Heart left ventricle (tissue), 16 donors: ENCODE measurements at regions of chr20 and their contacts with region 1.

Region 1: GRCh38 chr20:19784511-19785172 is 26.6 kb downstream of the RIN2 start:
- DNase-seq: peak in 4 of 5 donors; percentile 64 to 78 (median 73)
- ATAC-seq: peak; percentile 67 to 79 (median 72)
- H3K4me3 ChIP-seq: peak overlapping the region in 2 of 12 donors; percentile 5 to 6
- H3K27ac ChIP-seq: peak overlapping the region; percentile 69 to 91 (median 84)
- H3K4me1 ChIP-seq: peaks cover 12 to 68% (median 46%) of the 10 kb centered on the region in 12 donors
- H3K27me3 ChIP-seq: no peaks in the 10 kb centered on the region
- CTCF ChIP-seq: peak; percentile 65 to 87 (median 81)
- POLR2A ChIP-seq: no peak

Region 2: DNA sequence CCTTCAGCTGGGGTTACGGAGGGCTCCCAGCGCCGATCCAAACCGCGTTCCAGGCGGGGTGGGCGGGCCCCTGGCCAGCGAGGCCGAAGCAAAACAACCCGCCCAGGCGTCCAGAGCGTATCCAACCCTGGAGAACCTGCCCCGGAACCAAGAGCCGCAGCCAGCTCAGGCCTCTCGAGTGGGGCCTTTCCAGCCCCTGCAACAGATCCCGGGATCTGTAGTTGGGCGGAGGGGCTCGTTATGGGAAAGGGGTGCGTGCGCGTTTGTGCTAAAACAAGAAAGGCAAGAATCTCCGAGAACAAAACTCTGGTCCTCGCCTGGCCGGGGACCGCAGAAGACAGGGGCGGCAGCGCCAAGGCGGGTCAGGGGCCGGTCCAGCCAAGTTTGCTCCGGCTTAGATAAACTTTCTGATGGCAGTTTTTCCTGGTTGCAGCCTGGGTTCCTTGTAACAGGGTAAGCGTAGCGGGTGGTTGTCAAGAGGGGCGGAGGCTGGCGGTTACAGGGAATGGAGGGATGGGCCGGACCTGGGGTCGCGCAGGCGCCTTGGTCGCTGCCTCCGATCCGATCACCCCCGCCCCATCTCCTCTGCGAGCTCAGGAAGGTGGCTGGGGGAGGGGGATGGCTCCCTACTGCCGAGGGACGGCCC is 27.0 kb before region 1 on chr20:
- intact Hi-C with region 1: loop called in 4 of 10 experiments (anchors 2 kb)
- DNase-seq: peak; percentile 92 to 96 (median 94)
- ATAC-seq: peak; percentile 86 to 93 (median 90)
- H3K4me3 ChIP-seq: peak overlapping the region; percentile 52 to 94 (median 78)
- H3K27ac ChIP-seq: peak overlapping the region; percentile 91 to 100 (median 98)
- H3K4me1 ChIP-seq: peaks cover 6 to 50% (median 38%) of the 10 kb centered on the region in 12 donors
- H3K27me3 ChIP-seq: no peaks in the 10 kb centered on the region
- CTCF ChIP-seq: no peak
- POLR2A ChIP-seq: no peak

Region 3: DNA sequence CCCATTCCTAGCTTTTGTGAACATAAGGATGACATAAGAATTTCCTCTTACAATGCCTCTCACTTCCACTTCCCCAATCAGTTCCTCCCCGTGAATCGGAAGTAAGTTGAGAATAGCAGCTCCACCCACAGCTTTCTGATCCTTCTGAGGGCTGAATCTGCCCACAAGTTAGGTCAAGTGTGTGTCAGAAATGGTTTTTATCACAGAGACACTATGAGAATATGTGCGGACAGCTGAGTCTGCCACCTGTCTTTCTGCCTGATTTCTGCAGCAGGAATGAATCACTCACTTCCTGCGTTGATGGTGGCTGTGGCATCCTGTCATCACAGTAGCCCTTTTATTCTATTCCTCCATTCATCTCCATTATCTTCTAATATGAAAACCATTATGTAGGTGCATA is 43.6 kb after region 1 on chr20:
- intact Hi-C with region 1: loop called in 2 of 10 experiments (anchors 5 kb)
- DNase-seq: peak in 1 of 5 donors; percentile 23
- ATAC-seq: peak in 3 of 4 donors; percentile 47 to 66 (median 55)
- H3K4me3 ChIP-seq: no peak overlapping the region
- H3K27ac ChIP-seq: peak overlapping the region in 6 of 12 donors; percentile 1 to 19 (median 12)
- H3K4me1 ChIP-seq: peaks cover 4 to 54% (median 33%) of the 10 kb centered on the region in 12 donors
- H3K27me3 ChIP-seq: no peaks in the 10 kb centered on the region
- CTCF ChIP-seq: peak in 8 of 12 donors; percentile 20 to 64 (median 48)
- POLR2A ChIP-seq: no peak

Region 4: DNA sequence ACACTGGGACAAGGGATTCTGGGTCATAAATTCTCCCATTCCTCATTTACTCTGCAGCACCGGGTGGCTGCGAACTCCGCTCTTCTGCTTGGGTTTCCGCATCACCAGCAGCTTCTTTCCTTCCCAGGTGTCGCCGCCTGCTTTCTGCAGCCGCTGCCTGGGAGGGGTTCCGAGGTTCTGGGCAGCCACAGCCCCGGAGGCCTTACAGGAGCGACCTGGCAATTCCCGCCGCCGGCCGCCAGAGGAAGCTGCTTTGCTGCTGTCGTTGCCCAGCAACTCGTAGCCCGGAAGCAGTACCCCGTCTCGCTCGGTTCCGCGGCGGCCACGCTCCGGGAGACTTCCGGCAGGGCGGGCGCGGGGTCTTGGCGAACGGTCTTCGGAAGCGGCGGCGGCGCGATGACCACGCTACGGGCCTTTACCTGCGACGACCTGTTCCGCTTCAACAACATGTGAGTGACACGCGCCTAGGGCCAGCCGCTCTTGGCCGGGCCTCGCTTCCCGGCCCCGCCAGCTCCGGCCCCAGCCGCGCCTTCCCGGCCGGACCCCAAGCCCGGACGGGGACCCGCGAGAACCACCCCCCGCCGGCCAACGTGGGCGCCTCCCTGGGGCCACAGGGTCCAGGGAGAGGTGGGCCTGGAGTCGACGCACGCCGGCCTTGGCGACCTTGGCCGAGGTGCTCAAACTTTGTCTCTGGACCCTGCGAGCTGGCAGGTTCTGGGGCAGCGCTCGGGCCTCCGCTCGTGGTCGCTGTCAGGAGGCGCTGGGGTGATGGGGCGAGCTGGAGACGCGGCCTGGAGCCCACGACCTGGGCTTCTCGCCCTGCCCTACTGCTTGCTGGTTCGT is 232.6 kb after region 1 on chr20 and contains the start of gene NAA20:
- intact Hi-C with region 1: no loop called
- DNase-seq: peak; percentile 95 to 96 (median 95)
- ATAC-seq: peak; percentile 96 to 99 (median 99)
- H3K4me3 ChIP-seq: peak within 1 kb of the TSS; percentile 71 to 99 (median 82)
- H3K27ac ChIP-seq: peak within 1 kb of the TSS; percentile 14 to 85 (median 76)
- H3K4me1 ChIP-seq: peaks cover 0 to 61% (median 28%) of the 10 kb centered on the region in 12 donors
- H3K27me3 ChIP-seq: no peaks in the 10 kb centered on the region
- CTCF ChIP-seq: peak; percentile 56 to 89 (median 79)
- POLR2A ChIP-seq: peak in 1 of 2 donors; percentile 49
- total RNA-seq, gene NAA20: 36.0 to 79.8 (median 59.1) TPM